ENCODE measurements at regions of chr7 and their contacts with region 1.

Region 1: GRCh38 chr7:21427182-21427870 is 557 bp upstream of the SP4 start:
- DNase-seq: peak; percentile 98 to 100 (median 99)
- ATAC-seq: peak; percentile 85
- H3K4me3 ChIP-seq: peak overlapping the region; percentile 99
- H3K4me3 Mint-ChIP-seq: peak overlapping the region; percentile 94 to 99 (median 98)
- H3K27ac ChIP-seq: peak overlapping the region; percentile 99
- H3K27ac Mint-ChIP-seq: peak overlapping the region; percentile 94 to 100 (median 99)
- H3K4me1 ChIP-seq: peaks cover 37 to 41% of the 10 kb centered on the region in 2 donors
- H3K4me1 Mint-ChIP-seq: peaks cover 24 to 52% (median 52%) of the 10 kb centered on the region in 7 donors
- H3K27me3 ChIP-seq: no peaks in the 10 kb centered on the region
- H3K27me3 Mint-ChIP-seq: no peaks in the 10 kb centered on the region

Region 2: DNA sequence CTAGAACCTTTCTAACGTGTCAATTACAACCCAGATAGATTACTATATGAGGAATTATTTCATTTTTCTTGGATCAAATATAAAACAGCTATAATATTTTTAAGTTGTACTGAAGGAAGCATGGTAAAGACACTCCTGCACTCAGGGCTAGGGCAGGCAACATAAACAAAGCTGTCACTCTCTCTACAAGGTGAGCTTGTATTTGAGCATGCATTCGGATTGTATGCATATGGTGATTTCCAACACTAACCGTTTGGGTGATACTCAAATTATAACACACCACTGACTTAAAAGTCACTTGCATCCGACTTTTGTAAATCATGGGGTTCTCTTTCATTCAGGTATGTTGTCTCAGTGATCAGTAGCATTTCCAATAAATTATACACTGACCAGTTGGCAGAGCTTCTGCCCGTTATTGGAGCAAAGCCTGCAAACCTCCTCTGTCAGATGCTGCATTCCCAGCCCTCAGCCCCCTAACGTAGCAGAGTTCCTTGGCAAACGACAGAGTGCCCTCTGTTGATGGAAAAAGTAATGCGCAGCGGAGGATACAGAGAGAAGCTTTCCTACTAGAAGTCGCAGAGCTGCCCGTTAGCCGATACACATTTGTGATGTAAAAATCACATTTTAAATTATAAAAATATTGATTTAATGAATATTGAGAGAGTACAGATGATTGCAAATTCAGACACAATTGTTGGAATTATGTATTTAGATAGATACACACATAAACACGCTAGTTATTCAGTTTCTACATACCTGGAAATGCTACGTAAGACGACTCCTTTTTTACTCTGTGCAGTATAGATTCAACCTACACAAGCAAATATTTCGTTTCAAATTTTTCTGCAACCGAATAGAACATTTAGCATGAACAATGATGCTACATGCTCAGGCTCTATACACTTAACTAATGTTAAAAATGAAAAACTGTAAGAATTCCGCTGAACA is 173.3 kb before region 1 on chr7:
- CTCF ChIA-PET with region 1: no interaction called
- POLR2A ChIA-PET with region 1: no interaction called
- intact Hi-C with region 1: loop called in 1 of 2 experiments (anchors 1 kb)
- DNase-seq: peak in 8 of 9 donors; percentile 3 to 49 (median 24)
- ATAC-seq: peak; percentile 71
- H3K4me3 ChIP-seq: no peak overlapping the region
- H3K4me3 Mint-ChIP-seq: peak overlapping the region in 8 of 10 donors; percentile 39 to 66 (median 55)
- H3K27ac ChIP-seq: no peak overlapping the region
- H3K27ac Mint-ChIP-seq: no peak overlapping the region
- H3K4me1 ChIP-seq: no peaks in the 10 kb centered on the region
- H3K4me1 Mint-ChIP-seq: peaks cover 0 to 21% (median 0%) of the 10 kb centered on the region in 7 donors
- H3K27me3 ChIP-seq: peaks cover 4 to 18% of the 10 kb centered on the region in 2 donors
- H3K27me3 Mint-ChIP-seq: peaks cover 62 to 77% (median 68%) of the 10 kb centered on the region in 5 donors

Region 3: DNA sequence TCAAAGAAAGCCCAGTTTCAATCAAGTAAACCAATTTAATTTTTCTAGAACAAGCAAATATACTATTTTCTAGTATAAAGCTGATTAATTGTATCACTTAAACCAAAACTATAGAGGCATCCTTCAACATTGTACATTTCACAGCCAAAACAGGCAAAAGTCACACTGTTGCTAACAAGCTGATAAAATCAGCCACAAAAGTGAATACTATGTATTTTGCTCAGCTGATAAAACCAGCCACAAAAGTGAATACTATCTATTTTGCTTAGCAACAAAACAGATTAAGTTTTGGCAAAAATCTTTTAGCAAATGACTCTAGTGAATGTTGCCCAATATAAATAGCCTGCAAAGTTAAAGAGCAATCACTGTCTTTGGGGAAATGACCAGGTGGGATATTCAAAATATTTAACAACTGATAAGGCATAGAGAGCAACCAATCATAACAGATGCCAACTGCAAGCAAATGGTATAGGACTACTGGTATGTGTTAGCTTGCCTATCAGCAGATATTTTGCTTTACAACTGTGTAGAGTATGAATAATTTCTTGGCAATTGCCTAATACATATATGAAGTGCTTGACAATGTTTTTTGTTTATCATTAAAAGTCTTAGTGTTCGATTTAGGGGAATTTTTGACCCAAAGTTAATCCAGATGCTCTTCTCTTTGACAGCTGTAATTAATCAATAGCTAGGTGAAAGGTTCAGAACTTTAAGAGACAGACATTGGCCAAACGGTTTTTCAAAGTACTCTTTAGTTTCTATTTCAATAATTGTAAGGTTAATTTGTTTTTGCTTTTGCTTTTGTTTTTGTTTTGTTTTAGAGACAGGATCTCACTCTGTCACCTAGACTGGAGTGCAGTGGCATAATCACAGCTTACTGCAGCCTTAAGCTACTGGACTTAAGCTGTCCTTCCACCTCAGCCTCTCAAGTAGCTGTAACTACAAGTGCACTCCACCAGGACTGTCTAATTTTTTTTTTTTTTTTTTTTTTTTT is 43.8 kb before region 1 on chr7:
- CTCF ChIA-PET with region 1: no interaction called
- POLR2A ChIA-PET with region 1: interaction called, 3 read pairs
- intact Hi-C with region 1: loop called in 1 of 2 experiments (anchors 1 kb)
- DNase-seq: no peak
- ATAC-seq: peak; percentile 69
- H3K4me3 ChIP-seq: no peak overlapping the region
- H3K4me3 Mint-ChIP-seq: peak overlapping the region in 2 of 10 donors; percentile 59 to 63
- H3K27ac ChIP-seq: no peak overlapping the region
- H3K27ac Mint-ChIP-seq: peak overlapping the region in 2 of 9 donors; percentile 12 to 87
- H3K4me1 ChIP-seq: peaks cover 0 to 13% of the 10 kb centered on the region in 2 donors
- H3K4me1 Mint-ChIP-seq: peaks cover 0 to 37% (median 6%) of the 10 kb centered on the region in 7 donors
- H3K27me3 ChIP-seq: no peaks in the 10 kb centered on the region
- H3K27me3 Mint-ChIP-seq: no peaks in the 10 kb centered on the region

Region 4: GRCh38 chr7:21507626-21508343 is 80.5 kb after region 1 on chr7:
- CTCF ChIA-PET with region 1: no interaction called
- POLR2A ChIA-PET with region 1: no interaction called
- intact Hi-C with region 1: no loop called
- DNase-seq: peak in 4 of 9 donors; percentile 6 to 26 (median 16)
- ATAC-seq: peak; percentile 61
- H3K4me3 ChIP-seq: no peak overlapping the region
- H3K4me3 Mint-ChIP-seq: no peak overlapping the region
- H3K27ac ChIP-seq: no peak overlapping the region
- H3K27ac Mint-ChIP-seq: no peak overlapping the region
- H3K4me1 ChIP-seq: no peaks in the 10 kb centered on the region
- H3K4me1 Mint-ChIP-seq: peaks cover 0 to 7% (median 3%) of the 10 kb centered on the region in 7 donors
- H3K27me3 ChIP-seq: no peaks in the 10 kb centered on the region
- H3K27me3 Mint-ChIP-seq: no peaks in the 10 kb centered on the region

Region 5: DNA sequence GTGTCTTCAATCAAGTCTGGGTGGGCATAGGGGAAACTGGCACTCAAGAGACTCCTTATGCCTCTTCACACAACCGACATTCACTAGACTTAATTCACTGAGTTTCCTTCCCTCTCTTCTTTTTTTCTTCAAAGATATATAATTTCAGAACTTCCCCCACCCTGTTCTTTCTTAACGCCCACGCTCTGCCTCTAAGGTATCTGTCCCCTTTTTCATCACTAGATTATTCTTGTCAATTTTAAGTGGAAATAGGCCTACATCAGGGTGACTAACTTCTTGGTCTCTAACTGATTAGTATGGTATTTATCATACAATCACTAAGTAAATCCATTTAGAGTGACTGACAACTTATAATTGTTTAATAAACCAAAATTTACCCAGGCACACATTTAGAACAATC is 391.7 kb after region 1 on chr7:
- CTCF ChIA-PET with region 1: no interaction called
- POLR2A ChIA-PET with region 1: no interaction called
- intact Hi-C with region 1: no loop called
- DNase-seq: no peak
- ATAC-seq: no peak
- H3K4me3 ChIP-seq: no peak overlapping the region
- H3K4me3 Mint-ChIP-seq: no peak overlapping the region
- H3K27ac ChIP-seq: no peak overlapping the region
- H3K27ac Mint-ChIP-seq: peak overlapping the region in 2 of 9 donors; percentile 0 to 29
- H3K4me1 ChIP-seq: no peaks in the 10 kb centered on the region
- H3K4me1 Mint-ChIP-seq: peaks cover 0 to 8% (median 7%) of the 10 kb centered on the region in 7 donors
- H3K27me3 ChIP-seq: no peaks in the 10 kb centered on the region
- H3K27me3 Mint-ChIP-seq: no peaks in the 10 kb centered on the region

Region 6: GRCh38 chr7:21850531-21851285 is 423.4 kb after region 1 on chr7:
- CTCF ChIA-PET with region 1: no interaction called
- POLR2A ChIA-PET with region 1: no interaction called
- intact Hi-C with region 1: loop called in 1 of 2 experiments (anchors 5 kb)
- DNase-seq: no peak
- ATAC-seq: no peak
- H3K4me3 ChIP-seq: peak overlapping the region; percentile 27
- H3K4me3 Mint-ChIP-seq: peak overlapping the region in 9 of 10 donors; percentile 13 to 91 (median 78)
- H3K27ac ChIP-seq: no peak overlapping the region
- H3K27ac Mint-ChIP-seq: peak overlapping the region in 8 of 9 donors; percentile 85 to 97 (median 92)
- H3K4me1 ChIP-seq: peaks cover 0 to 20% of the 10 kb centered on the region in 2 donors
- H3K4me1 Mint-ChIP-seq: peaks cover 6 to 44% (median 34%) of the 10 kb centered on the region in 7 donors
- H3K27me3 ChIP-seq: no peaks in the 10 kb centered on the region
- H3K27me3 Mint-ChIP-seq: peaks cover 0 to 5% (median 0%) of the 10 kb centered on the region in 5 donors

Region 7: DNA sequence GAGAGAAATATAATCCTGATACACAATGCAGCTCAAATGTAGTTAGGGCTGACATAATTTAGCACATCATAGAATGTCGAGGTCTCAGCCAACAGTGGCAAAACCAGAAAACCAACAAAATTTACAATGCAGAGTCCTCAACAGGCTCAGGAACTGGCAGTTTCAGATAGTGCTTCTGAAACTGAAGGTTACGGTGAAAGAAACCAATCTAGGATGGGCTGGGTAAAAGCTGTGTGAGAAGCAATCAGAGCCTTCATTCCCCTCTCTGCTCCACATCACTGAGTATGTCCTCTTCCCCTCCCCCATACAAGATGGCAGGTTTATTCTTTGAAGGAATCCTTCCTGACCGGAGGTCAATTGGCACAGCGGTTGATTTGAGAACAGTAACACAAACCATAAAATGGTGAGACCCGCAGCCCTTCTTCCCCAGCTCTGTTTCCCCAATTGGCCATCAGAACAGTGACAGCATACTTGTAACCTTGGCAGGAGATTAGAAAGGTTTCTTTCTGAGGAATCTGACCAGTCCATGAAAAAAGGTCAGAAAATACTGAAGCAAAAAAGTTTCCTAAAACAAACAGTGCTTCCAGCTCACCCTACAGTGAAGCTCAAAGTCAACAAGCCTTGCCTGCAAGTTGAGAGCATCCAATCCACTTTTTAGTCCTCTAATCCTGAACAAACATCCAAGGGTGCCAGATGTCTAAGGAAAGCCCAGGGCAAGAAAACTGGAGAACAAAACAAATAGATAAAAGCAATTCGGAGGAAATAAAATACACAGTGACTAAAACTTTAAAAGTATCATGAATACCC is 1245.7 kb after region 1 on chr7:
- CTCF ChIA-PET with region 1: no interaction called
- POLR2A ChIA-PET with region 1: no interaction called
- intact Hi-C with region 1: loop called in 1 of 2 experiments (anchors 10 kb)
- DNase-seq: no peak
- ATAC-seq: no peak
- H3K4me3 ChIP-seq: no peak overlapping the region
- H3K4me3 Mint-ChIP-seq: peak overlapping the region in 7 of 10 donors; percentile 7 to 68 (median 37)
- H3K27ac ChIP-seq: no peak overlapping the region
- H3K27ac Mint-ChIP-seq: peak overlapping the region; percentile 14 to 88 (median 78)
- H3K4me1 ChIP-seq: peaks cover 18 to 54% of the 10 kb centered on the region in 2 donors
- H3K4me1 Mint-ChIP-seq: peaks cover 43 to 68% (median 65%) of the 10 kb centered on the region in 7 donors
- H3K27me3 ChIP-seq: no peaks in the 10 kb centered on the region
- H3K27me3 Mint-ChIP-seq: peaks cover 0 to 13% (median 0%) of the 10 kb centered on the region in 5 donors

Region 8: GRCh38 chr7:23105644-23106056 is 1678.3 kb after region 1 on chr7 and contains the start of gene KLHL7:
- CTCF ChIA-PET with region 1: no interaction called
- POLR2A ChIA-PET with region 1: no interaction called
- intact Hi-C with region 1: loop called in 1 of 2 experiments (anchors 1 kb)
- DNase-seq: peak; percentile 90 to 95 (median 93)
- ATAC-seq: peak; percentile 99
- H3K4me3 ChIP-seq: peak within 1 kb of the TSS; percentile 93
- H3K4me3 Mint-ChIP-seq: peak within 1 kb of the TSS; percentile 90 to 99 (median 96)
- H3K27ac ChIP-seq: peak within 1 kb of the TSS; percentile 90
- H3K27ac Mint-ChIP-seq: peak within 1 kb of the TSS; percentile 91 to 97 (median 96)
- H3K4me1 ChIP-seq: peaks cover 4 to 18% of the 10 kb centered on the region in 2 donors
- H3K4me1 Mint-ChIP-seq: peaks cover 33 to 51% (median 47%) of the 10 kb centered on the region in 7 donors
- H3K27me3 ChIP-seq: no peaks in the 10 kb centered on the region
- H3K27me3 Mint-ChIP-seq: no peaks in the 10 kb centered on the region
- total RNA-seq, gene KLHL7: 16.9 to 22.9 (median 22.7) TPM